ENCODE measurements at regions of chr2 and their contacts with region 1.

Region 1: DNA sequence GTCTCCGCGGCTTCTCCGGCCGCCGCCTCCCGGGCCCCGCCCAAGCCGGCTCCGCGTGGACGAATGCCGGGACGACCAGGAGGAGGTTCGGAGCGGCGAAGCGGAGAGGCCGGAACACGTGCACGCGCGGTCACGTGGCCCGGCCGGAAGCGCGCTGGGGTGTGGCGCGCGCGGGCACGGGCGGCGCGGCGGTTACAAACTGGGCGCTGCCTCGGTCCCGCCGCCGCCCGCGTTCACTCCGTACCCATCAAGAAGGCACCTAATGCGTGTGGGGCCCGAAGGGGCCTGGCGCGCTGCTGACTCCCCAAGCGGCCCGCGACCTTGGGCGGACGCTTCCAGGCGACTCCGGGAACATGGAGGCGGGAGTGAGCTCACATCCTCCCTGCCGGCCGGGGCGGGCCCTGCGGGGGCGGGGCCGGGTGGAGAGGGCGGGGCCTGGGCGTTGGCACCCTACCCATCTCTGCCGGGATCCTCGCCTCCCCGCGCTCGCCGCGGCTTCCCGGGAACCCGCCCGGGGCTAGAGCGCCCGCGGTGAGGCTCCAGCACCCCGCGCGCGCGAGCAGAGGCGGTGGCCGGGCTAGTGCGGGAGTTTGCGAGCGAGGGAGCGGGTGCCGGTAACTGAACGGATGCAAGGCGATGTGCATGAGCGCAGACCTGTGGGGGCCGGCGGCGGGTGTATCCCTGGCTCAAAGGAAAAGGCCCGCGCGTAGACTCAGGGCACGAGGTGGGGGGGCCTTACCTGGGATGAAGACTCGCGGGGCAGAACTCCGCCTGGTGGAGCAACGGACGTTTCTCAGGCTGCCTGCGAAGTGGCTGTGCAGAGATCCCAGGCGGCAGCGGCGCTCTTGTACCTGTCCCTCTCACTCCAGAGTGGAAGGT is at the start of gene TMEM185B:
- DNase-seq: peak; percentile 97
- ATAC-seq: peak; percentile 96
- H3K4me3 Mint-ChIP-seq: peak within 1 kb of the TSS; percentile 87
- H3K27ac Mint-ChIP-seq: peak within 1 kb of the TSS; percentile 90
- H3K4me1 Mint-ChIP-seq: peaks cover 56% of the 10 kb centered on the region
- H3K27me3 Mint-ChIP-seq: no peaks in the 10 kb centered on the region
- CTCF ChIP-seq: no peak
- total RNA-seq, gene TMEM185B: 25.6 and 26.8 TPM in 2 replicates

Region 2: DNA sequence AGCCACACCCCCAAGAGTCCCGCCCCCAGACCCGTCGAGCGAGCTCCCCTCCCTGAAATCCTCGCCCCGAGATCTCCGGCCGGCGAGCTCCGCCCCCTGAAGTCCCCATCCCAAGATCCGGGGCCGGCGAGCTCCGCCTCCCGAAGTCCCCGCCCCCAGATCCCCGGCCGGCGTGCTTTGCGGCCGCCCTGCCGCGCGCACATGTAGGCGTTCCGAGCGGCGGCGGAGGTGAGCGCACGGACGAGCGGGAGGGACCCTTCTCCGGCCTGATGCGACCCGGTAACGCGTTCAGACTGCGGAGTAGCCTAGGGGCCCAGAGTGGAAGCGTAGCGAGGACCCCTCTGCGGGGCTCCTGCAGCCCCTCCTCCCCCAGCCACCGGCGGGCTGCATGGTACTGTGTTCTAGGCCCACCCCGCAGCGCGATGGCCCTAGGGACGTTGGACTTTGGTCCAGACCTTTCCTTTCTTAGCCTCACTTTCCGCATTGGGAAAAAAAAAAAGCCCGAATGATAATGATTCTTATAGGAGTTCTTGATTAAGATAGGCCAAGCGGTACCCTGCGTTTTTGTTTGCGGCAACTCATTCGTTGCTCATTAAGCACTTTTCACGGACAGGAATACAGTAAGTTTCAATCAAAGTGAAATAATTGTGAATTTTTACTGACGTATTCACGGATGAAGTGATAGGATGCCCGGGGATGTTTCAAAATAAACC is 544.1 kb before region 1 on chr2 and contains the start of gene TMEM177:
- CTCF ChIA-PET with region 1: no interaction called
- POLR2A ChIA-PET with region 1: interaction called, 3 read pairs
- intact Hi-C with region 1: loop called (anchors 2 kb)
- DNase-seq: peak; percentile 90
- ATAC-seq: peak; percentile 96
- H3K4me3 Mint-ChIP-seq: peak within 1 kb of the TSS; percentile 90
- H3K27ac Mint-ChIP-seq: peak within 1 kb of the TSS; percentile 68
- H3K4me1 Mint-ChIP-seq: peaks cover 23% of the 10 kb centered on the region
- H3K27me3 Mint-ChIP-seq: no peaks in the 10 kb centered on the region
- CTCF ChIP-seq: no peak
- total RNA-seq, gene TMEM177: 9.0 and 10.3 TPM in 2 replicates

Region 3: DNA sequence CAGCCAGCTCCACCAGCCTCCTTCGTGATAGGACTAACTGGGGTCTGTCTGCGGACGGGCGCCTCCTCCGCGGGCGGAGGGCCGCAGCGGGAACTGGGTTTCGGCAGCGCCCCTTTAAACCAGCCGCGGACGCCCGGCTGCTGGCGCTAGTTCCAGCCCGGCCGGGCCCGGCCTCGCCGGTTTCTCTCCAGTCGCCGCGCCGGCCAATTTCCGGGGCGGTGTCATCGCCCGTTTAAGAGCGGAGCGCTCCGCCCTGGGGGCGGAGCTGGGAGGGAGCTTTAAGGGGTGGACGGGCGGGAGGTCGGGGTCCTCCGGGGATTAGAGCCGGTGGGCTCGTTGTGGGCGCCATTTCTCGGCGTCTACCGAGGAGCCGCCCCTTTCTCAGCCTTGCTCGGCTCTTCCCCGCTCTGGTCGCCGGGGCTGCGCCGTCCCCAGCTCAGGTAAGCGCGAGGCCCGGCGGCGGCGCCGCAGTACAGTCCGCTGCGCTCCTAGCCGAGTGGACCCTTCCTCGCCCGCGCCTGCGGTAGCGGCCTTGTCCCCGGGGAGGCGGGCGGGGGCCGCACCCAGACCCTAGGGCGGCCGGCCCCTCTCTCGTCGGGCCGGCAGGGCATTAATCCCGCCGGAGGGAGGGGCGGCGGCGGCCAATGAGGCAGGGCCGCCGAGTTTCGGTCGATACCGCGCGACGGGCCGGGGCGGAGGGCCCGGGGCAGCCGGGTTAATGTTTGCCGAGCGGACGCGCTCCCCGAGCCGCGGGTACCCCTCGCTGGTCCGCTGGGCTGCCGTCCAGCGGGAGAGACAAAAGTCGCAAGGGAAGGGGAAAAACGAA is 210.3 kb before region 1 on chr2 and contains the start of gene EPB41L5:
- CTCF ChIA-PET with region 1: no interaction called
- POLR2A ChIA-PET with region 1: interaction called, 7 read pairs
- intact Hi-C with region 1: loop called (anchors 1 kb)
- DNase-seq: peak; percentile 77
- ATAC-seq: peak; percentile 87
- H3K4me3 Mint-ChIP-seq: peak within 1 kb of the TSS; percentile 87
- H3K27ac Mint-ChIP-seq: peak within 1 kb of the TSS; percentile 79
- H3K4me1 Mint-ChIP-seq: peaks cover 32% of the 10 kb centered on the region
- H3K27me3 Mint-ChIP-seq: no peaks in the 10 kb centered on the region
- CTCF ChIP-seq: no peak
- total RNA-seq, gene EPB41L5: 20.9 and 29.4 TPM in 2 replicates

Region 4: GRCh38 chr2:120265006-120265405 is 41.7 kb after region 1 on chr2:
- CTCF ChIA-PET with region 1: no interaction called
- POLR2A ChIA-PET with region 1: no interaction called
- intact Hi-C with region 1: loop called (anchors 5 kb)
- DNase-seq: no peak
- ATAC-seq: no peak
- H3K4me3 Mint-ChIP-seq: peak overlapping the region; percentile 48
- H3K27ac Mint-ChIP-seq: no peak overlapping the region
- H3K4me1 Mint-ChIP-seq: peaks cover 49% of the 10 kb centered on the region
- H3K27me3 Mint-ChIP-seq: no peaks in the 10 kb centered on the region
- CTCF ChIP-seq: no peak

Region 5: DNA sequence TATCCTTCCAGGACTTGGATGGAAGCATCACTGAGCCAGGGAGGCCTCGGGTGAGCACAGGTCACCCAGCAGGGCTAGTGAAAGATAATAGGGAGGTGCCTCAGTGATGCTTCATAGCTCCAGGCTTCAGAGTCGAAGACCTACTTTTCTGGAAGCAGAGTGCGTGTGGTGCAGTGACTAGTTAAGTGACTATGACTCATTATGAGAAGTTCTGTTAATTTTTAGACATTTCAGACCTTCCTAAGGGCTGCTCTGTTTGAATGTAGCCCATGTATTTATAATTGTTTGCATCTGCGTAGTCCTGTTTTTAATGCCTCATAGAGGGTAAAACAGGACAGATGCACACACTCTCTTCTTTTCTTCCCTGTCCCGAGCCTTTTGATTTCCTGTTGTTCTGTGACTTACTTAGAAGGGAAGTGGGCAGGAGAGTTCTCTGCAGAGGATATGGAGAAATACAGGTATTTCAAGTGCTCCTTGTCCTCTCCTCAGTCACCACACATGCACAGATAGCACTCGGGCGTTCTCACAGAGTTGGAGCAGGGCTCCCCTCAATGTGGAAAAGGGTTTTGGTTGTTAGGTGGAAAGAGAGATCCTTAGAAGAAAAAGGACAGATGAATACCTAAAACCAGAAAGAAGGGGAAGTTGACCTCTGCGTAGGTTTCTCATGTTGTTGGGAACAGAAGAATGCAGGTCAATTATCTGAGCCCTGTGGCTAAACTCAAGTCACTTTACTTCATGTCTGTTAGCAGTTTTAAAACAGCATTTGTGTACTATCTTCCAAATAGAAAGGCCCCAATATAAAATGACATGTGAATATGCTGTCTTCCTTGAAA is 64.1 kb after region 1 on chr2:
- CTCF ChIA-PET with region 1: no interaction called
- POLR2A ChIA-PET with region 1: interaction called, 3 read pairs
- intact Hi-C with region 1: loop called (anchors 1 kb)
- DNase-seq: no peak
- ATAC-seq: peak; percentile 95
- H3K4me3 Mint-ChIP-seq: peak overlapping the region; percentile 53
- H3K27ac Mint-ChIP-seq: peak overlapping the region; percentile 89
- H3K4me1 Mint-ChIP-seq: peaks cover 19% of the 10 kb centered on the region
- H3K27me3 Mint-ChIP-seq: no peaks in the 10 kb centered on the region
- CTCF ChIP-seq: no peak